GM18951 (cell line): ENCODE measurements at regions of chr1 and their contacts with region 1.

Region 1: DNA sequence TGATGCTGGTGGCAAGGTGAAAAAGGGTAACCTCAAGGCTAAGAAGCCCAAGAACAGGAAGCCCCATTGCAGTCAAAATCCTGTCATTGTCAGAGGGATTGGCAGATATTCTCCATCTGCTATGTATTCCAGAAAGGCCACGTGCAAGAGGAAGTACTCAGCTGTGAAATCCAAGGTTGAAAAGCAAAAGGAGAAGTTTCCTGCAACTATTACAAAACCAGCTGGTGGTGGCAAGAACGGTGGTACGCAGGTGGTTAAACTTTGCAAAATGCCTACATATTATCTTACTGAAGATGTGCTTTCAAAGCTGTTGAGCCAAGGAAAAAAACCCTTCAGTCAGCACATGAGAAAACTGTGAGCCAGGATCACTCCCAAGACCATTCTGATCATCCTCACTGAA is 13.7 kb upstream of the VPS45 start:
- POLR2A ChIP-seq: no peak

Region 2: GRCh38 chr1:149962123-149962548 is 91.8 kb before region 1 on chr1:
- in situ Hi-C with region 1: loop called (anchors 10 kb)
- POLR2A ChIP-seq: no peak

Region 3: DNA sequence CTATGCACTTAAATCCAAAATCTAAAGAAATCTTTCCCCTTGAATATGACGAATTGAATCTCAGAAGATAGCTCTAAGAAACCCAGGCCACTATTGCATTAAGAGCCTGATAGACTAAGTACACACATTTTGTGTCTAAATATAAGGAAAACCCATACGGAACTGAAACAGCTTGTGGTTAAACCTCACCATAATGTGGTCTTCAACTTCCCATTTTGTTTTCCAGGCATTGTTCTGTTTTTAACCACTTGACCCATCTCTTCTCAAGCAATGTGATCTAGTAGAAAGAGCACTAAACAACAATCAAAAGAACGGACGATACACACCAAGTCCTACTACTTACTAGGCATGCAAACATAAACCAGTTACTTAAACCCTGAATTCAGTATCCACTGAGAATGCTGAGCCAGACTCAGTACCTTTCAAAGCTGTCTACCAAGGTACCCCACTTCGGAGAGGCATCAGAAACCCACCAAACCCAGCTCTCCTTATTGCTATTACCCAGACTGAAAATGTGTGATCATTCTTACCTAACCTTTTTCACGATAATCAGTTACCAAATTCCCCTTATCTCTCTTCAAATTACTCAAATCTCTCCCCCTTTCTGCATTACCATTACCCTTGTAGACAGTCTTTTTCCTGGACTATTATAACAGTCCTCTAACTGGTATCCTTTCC is 56.2 kb before region 1 on chr1:
- in situ Hi-C with region 1: no loop called
- POLR2A ChIP-seq: no peak

Region 4: GRCh38 chr1:150162862-150163706 is 109.2 kb after region 1 on chr1:
- in situ Hi-C with region 1: no loop called
- POLR2A ChIP-seq: peak; percentile 70

Region 5: GRCh38 chr1:150420560-150421265 is 366.8 kb after region 1 on chr1:
- in situ Hi-C with region 1: no loop called
- POLR2A ChIP-seq: no peak